ENCODE measurements at regions of chr19 and their contacts with region 1.

Region 1: GRCh38 chr19:36182612-36183244 is 30.5 kb upstream of the COX7A1 start:
- DNase-seq: no peak
- ATAC-seq: no peak
- H3K4me3 Mint-ChIP-seq: no peak overlapping the region
- H3K27ac Mint-ChIP-seq: no peak overlapping the region
- H3K4me1 Mint-ChIP-seq: no peaks in the 10 kb centered on the region
- H3K27me3 Mint-ChIP-seq: no peaks in the 10 kb centered on the region
- CTCF ChIP-seq: no peak

Region 2: DNA sequence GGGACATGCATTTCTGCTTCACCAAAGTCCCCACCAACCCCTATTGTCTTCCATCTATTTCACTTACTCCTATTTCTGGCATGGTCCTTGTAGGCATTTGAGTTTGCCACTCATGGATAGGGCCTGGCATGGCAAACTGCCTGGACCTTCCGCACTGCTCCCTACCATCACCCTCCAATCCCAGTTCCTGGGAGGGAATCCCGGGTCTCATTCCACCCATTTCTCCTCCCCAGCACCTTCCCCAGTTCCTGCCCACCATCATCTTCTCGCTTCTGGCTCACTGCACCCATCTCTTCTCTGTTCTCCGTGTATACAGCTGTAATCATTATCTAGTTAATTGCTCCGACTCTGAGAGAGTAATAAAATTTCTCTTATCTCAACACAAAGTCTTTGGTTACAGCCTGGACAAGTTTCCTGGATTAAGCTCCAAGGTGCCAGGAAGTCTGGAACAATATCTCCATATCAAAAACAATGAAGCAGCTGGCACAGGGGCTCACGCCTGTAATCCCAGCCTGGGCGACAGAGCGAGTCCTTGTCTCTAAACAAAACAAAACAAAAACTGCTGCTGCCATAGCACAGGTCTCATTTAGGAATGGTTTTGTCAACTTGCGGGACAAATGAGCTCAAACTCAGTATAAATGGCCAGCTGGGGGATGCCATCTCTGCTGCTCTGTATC is 13.5 kb before region 1 on chr19:
- CTCF ChIA-PET with region 1: interaction called, 15 read pairs
- POLR2A ChIA-PET with region 1: interaction called, 3 read pairs
- intact Hi-C with region 1: no loop called
- DNase-seq: no peak
- ATAC-seq: no peak
- H3K4me3 Mint-ChIP-seq: no peak overlapping the region
- H3K27ac Mint-ChIP-seq: no peak overlapping the region
- H3K4me1 Mint-ChIP-seq: peaks cover 4% of the 10 kb centered on the region
- H3K27me3 Mint-ChIP-seq: no peaks in the 10 kb centered on the region
- CTCF ChIP-seq: no peak

Region 3: DNA sequence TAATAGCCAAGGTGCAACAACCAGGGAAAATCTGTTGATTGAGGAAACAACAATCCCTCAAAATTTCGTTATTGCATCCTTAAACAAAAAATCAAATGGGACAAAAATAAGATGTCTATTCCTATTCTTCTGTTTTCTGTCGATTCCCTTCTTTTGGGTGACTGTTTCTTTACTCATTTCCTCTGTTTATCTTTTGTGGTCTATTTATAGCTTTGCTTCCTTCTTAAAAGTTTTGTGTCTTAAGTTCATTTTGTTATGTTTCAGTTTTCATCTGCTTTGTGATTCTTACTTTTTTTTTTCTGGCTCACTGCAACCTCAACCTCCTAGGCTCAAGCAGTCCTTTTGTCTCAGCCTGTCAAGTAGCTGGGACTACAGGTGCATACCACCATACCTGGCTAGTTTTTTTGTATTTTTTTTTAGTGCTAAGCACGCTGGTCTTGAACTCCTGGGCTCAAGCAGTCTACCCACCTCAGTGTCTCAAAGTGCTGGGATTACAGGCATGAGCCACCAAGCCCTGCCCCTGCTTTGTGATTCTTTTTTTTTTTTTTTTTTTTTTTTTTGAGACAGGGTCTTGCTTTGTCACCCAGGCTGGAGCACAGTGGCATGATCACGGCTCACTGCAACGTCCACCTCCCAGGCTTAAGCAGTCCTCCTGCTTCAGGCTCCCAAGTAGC is 42.6 kb after region 1 on chr19:
- CTCF ChIA-PET with region 1: no interaction called
- POLR2A ChIA-PET with region 1: no interaction called
- intact Hi-C with region 1: no loop called
- DNase-seq: no peak
- ATAC-seq: no peak
- H3K4me3 Mint-ChIP-seq: no peak overlapping the region
- H3K27ac Mint-ChIP-seq: peak overlapping the region; percentile 70
- H3K4me1 Mint-ChIP-seq: peaks cover 31% of the 10 kb centered on the region
- H3K27me3 Mint-ChIP-seq: no peaks in the 10 kb centered on the region
- CTCF ChIP-seq: no peak